ENCODE measurements at regions of chr5 and their contacts with region 1.

Region 1: GRCh38 chr5:69042915-69043658 is 50.7 kb upstream of the SLC30A5 start:
- DNase-seq: peak in 1 of 2 donors; percentile 31
- ATAC-seq: peak; percentile 91 to 98 (median 94)
- H3K4me3 ChIP-seq: peak overlapping the region; percentile 69
- H3K27ac ChIP-seq: peak overlapping the region; percentile 72
- H3K4me1 ChIP-seq: no peaks in the 10 kb centered on the region
- H3K27me3 ChIP-seq: no peaks in the 10 kb centered on the region
- CTCF ChIP-seq: peak; percentile 90

Region 2: DNA sequence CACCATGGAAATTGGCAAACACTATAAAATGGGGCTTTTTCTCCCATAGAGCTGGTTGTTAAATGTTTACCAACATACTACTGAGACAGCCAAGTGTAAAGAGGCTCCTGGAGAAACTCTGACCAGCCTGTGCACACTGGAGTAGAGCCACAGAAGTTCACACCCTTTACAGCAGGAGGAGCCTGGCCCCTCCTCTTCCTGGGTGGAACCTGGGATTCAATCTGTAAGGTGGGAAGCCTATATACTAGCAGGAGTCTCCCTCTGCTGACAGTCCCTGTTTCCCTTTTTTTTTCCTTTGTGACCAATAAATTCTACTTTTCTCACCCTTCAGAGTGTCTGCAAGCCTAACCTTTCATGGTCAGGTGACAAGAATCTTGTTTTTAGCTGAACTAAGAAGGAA is 40.3 kb after region 1 on chr5:
- intact Hi-C with region 1: loop called in 1 of 2 experiments (anchors 2 kb)
- DNase-seq: no peak
- ATAC-seq: no peak
- H3K4me3 ChIP-seq: no peak overlapping the region
- H3K27ac ChIP-seq: no peak overlapping the region
- H3K4me1 ChIP-seq: no peaks in the 10 kb centered on the region
- H3K27me3 ChIP-seq: no peaks in the 10 kb centered on the region
- CTCF ChIP-seq: no peak

Region 3: DNA sequence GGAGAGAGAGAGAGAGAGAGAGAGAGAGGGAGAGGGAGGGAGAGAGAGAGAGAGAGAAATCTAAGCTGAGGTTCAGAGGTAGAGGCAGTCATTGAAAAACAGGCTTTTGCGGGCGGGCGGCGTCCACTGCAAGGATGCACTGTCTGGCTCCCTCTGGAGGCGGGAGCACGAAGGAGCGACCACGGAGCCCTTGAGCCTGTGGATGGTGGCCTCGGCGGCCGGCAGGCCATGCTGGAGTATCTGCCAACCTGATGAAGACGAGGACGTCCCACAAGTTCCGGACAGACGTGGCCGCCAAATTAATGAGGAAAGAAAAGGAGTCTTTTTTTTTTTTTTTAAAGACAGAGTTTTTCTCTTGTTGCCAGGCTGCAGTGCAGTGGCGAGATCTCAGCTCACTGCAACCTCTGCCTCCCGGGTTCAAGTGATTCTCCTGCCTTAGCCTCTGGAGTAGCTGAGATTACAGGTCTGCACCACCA is 291.7 kb after region 1 on chr5:
- intact Hi-C with region 1: loop called (anchors 2 to 5 kb)
- DNase-seq: peak; percentile 86 to 92
- ATAC-seq: peak; percentile 84 to 89 (median 86)
- H3K4me3 ChIP-seq: no peak overlapping the region
- H3K27ac ChIP-seq: no peak overlapping the region
- H3K4me1 ChIP-seq: peaks cover 9% of the 10 kb centered on the region
- H3K27me3 ChIP-seq: no peaks in the 10 kb centered on the region
- CTCF ChIP-seq: peak; percentile 79

Region 4: DNA sequence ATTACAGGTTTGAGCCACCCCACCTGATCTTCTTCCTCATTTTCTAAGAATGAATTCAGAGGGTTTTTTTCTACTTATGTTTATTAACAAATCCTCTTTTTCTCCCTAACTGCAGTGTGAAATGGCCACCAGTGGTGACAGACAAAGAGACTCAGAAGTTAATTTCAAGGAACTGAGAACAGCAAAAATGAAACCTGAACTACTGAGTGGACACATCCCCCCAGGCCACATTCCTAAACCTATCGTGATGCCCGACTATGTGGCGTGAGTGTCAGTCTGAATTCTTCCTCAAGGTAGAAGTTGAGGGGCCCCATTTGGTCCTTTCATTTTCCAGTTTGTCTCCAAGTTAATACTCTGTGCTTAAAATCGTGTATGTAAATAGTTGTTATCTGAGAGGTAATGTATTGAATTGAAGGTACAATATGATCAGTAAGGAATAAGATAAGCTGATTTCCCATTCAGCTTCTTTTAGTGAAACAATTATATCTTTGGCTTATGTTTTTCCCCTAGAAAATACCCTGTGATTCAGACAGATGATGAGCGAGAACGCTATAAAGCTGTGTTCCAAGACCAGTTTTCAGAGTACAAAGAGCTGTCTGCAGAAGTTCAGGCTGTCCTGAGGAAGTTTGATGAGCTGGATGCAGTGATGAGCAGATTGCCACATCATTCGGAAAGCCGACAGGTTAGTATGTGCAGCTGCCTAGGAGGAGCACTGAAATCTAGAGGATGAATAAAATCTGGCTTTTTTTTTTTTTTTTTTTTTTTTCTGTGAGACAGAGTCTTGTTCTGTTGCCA is 389.5 kb after region 1 on chr5:
- intact Hi-C with region 1: no loop called
- DNase-seq: no peak
- ATAC-seq: no peak
- H3K4me3 ChIP-seq: no peak overlapping the region
- H3K27ac ChIP-seq: no peak overlapping the region
- H3K4me1 ChIP-seq: no peaks in the 10 kb centered on the region
- H3K27me3 ChIP-seq: no peaks in the 10 kb centered on the region
- CTCF ChIP-seq: no peak